Psoas muscle (tissue), 8 donors: ENCODE measurements at regions of chr4 and their contacts with region 1.

Region 1: DNA sequence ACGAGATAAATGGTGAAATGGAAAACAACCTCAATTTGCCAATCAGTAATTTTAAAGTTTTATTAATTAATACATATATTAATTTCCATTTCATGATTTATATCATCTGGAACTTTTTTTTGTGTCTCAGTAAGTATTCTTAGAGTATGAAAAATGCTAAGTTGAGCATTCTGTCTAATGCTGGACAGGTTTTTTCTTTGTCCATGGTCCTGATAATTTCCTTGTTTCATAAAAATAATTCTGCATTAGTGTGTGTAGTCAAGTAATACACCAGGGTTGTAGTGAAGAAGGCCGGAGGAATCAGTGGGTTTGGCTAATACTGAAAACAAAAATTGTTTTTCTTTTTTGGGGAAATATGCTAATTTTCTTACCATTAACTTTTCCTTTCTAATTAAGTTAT is 9.9 kb downstream of the ANAPC4 start:
- DNase-seq: no peak
- ATAC-seq: no peak
- H3K4me3 ChIP-seq: no peak overlapping the region
- H3K27ac ChIP-seq: no peak overlapping the region
- H3K4me1 ChIP-seq: no peaks in the 10 kb centered on the region
- H3K27me3 ChIP-seq: no peaks in the 10 kb centered on the region
- CTCF ChIP-seq: no peak

Region 2: GRCh38 chr4:25421816-25422525 is 35.0 kb after region 1 on chr4:
- intact Hi-C with region 1: loop called in 1 of 2 experiments (anchors 5 kb)
- DNase-seq: no peak
- ATAC-seq: no peak
- H3K4me3 ChIP-seq: no peak overlapping the region
- H3K27ac ChIP-seq: no peak overlapping the region
- H3K4me1 ChIP-seq: peaks cover 21% of the 10 kb centered on the region
- H3K27me3 ChIP-seq: no peaks in the 10 kb centered on the region
- CTCF ChIP-seq: no peak